ENCODE measurements at regions of chr13 and their contacts with region 1.

Region 1: GRCh38 chr13:105825071-105825470 is 710.4 kb downstream of the EFNB2 start:
- DNase-seq: peak in 1 of 2 experiments; percentile 83
- H3K4me3 ChIP-seq: no peak overlapping the region
- H3K27ac ChIP-seq: peak overlapping the region; percentile 63
- H3K4me1 ChIP-seq: peaks cover 12% of the 10 kb centered on the region
- H3K27me3 ChIP-seq: no peaks in the 10 kb centered on the region
- CTCF ChIP-seq: no peak

Region 2: DNA sequence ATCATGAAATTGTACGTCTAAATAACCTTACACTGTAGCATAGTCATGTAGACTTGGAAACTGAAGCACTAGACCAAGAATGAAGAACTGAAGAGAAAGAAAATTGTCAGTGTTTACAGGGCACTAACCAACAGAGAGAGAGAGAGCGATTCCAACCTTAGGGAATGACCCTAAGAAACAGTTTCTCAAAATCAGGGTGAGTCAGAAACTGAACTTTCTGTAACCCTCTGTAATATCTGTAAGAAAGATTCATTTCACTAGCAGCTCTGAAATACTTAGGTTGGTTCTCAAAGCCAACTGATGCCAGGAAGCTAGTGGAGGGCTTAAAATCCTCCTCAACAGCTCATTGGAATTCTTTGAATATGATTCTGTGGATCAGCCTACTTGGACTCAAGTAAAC is 226.5 kb before region 1 on chr13:
- CTCF ChIA-PET with region 1: no interaction called
- POLR2A ChIA-PET with region 1: no interaction called
- intact Hi-C with region 1: no loop called
- DNase-seq: no peak
- H3K4me3 ChIP-seq: no peak overlapping the region
- H3K27ac ChIP-seq: no peak overlapping the region
- H3K4me1 ChIP-seq: no peaks in the 10 kb centered on the region
- H3K27me3 ChIP-seq: no peaks in the 10 kb centered on the region
- CTCF ChIP-seq: no peak

Region 3: GRCh38 chr13:105670179-105670990 is 154.7 kb before region 1 on chr13:
- CTCF ChIA-PET with region 1: interaction called, 11 read pairs
- POLR2A ChIA-PET with region 1: no interaction called
- intact Hi-C with region 1: no loop called
- DNase-seq: no peak
- H3K4me3 ChIP-seq: no peak overlapping the region
- H3K27ac ChIP-seq: no peak overlapping the region
- H3K4me1 ChIP-seq: no peaks in the 10 kb centered on the region
- H3K27me3 ChIP-seq: no peaks in the 10 kb centered on the region
- CTCF ChIP-seq: no peak

Region 4: DNA sequence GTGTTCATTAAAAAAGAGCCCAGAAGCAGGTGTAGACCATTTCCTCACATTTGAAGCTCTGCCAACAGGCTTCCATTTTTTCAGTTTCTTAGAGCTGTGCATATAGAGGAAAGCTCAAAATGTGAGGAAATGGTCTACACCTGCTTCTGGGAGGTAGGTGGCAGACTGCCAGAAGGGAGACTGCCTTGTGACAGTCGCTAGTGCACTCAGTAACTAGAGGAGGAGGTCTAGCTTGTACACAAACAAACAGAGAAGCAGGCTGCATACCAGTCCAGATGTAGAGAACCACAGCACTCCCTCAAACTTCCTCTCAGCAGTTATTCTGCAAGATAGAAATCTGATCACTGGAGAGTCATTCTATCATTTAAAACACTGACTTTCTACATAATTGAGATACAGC is 89.8 kb before region 1 on chr13:
- CTCF ChIA-PET with region 1: no interaction called
- POLR2A ChIA-PET with region 1: interaction called, 14 read pairs
- intact Hi-C with region 1: no loop called
- DNase-seq: peak in 1 of 2 experiments; percentile 5
- H3K4me3 ChIP-seq: no peak overlapping the region
- H3K27ac ChIP-seq: no peak overlapping the region
- H3K4me1 ChIP-seq: peaks cover 8% of the 10 kb centered on the region; the same call in 1 of the 2 replicates
- H3K27me3 ChIP-seq: no peaks in the 10 kb centered on the region
- CTCF ChIP-seq: no peak

Region 5: GRCh38 chr13:105863300-105863920 is 38.3 kb after region 1 on chr13:
- CTCF ChIA-PET with region 1: no interaction called
- POLR2A ChIA-PET with region 1: no interaction called
- intact Hi-C with region 1: no loop called
- DNase-seq: no peak
- H3K4me3 ChIP-seq: no peak overlapping the region
- H3K27ac ChIP-seq: no peak overlapping the region
- H3K4me1 ChIP-seq: no peaks in the 10 kb centered on the region
- H3K27me3 ChIP-seq: no peaks in the 10 kb centered on the region
- CTCF ChIP-seq: no peak

Region 6: GRCh38 chr13:105948143-105948542 is 123.1 kb after region 1 on chr13:
- CTCF ChIA-PET with region 1: no interaction called
- POLR2A ChIA-PET with region 1: no interaction called
- intact Hi-C with region 1: no loop called
- DNase-seq: no peak
- H3K4me3 ChIP-seq: no peak overlapping the region
- H3K27ac ChIP-seq: no peak overlapping the region
- H3K4me1 ChIP-seq: no peaks in the 10 kb centered on the region
- H3K27me3 ChIP-seq: no peaks in the 10 kb centered on the region
- CTCF ChIP-seq: no peak

Measured in PC-9 (cell line).